Activated T-helper 1 cell treated with anti-CD3 and anti-CD28 coated beads, Interleukin-12 subunit alpha, Interleukin-12 subunit beta, Interleukin-2, Interleukin-4 antibody, amounts not matched to agents 30 ng/mL and 10 ng/mL and 1 ng/mL, durations not matched to agents 14 hours and 24 hours and 36 hours (primary cell): ENCODE measurements at regions of chr5 and their contacts with region 1.

Region 1: DNA sequence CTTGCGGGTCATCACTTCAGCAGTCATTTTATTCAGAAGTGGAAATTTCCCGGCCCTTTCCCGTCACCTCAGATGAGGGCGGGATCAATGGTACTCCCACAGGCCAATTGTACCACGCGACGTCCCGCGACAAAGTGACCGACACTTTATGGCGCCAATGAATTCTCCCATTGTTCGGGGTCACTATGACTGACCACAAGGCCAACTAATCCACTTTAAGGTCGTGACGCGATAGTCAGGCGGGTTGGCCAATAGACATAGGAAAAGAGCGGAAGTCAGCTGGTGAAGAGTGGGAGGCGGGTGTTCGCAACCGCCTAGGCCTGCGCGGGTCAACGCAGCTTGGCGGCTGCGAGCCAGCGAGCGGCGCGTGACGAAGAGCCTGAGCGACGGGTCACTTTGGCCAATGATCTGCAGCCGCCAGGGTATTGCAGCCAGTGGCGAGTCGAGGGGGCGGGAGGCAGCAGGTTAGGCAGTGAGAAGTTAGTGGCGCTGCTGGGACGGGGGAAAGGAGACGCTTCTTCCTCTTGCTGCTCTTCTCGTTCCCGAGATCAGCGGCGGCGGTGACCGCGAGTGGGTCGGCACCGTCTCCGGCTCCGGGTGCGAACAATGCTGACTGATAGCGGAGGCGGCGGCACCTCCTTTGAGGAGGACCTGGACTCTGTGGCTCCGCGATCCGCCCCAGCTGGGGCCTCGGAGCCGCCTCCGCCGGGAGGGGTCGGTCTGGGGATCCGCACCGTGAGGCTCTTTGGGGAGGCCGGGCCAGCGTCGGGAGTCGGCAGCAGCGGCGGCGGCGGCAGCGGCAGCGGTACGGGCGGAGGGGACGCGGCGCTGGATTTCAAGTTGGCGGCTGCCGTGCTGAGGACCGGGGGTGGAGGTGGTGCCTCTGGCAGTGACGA is at the start of gene ANKHD1:
- DNase-seq: peak; percentile 96
- H3K4me3 Mint-ChIP-seq: no peak within 1 kb of the TSS
- H3K27ac Mint-ChIP-seq: peak within 1 kb of the TSS; percentile 88
- H3K4me1 Mint-ChIP-seq: peaks cover 24% of the 10 kb centered on the region
- H3K27me3 Mint-ChIP-seq: no peaks in the 10 kb centered on the region
- total RNA-seq, gene ANKHD1: 121 and 123 TPM in 2 replicates

Region 2: DNA sequence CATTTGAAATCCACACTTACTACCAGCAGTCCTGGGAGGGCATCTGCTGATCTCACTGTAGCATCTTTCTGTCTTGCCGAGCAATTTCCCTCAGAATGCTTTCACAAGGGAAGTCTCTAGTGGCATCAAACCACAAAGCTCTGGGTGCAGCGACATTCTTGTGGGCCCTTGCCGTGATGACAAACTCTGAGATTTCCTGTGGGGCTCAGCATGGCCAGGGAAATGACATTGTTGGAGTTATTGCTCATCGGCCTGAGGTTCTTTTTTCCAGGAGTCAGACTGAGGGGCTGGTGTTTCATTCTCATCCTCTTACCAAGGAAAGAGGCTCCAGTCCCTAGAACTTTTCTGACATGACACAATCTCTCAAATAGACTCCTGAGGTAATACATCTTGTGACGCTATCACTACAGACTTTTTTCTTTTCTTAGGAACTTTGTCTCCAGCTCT is 150.1 kb before region 1 on chr5:
- intact Hi-C with region 1: loop called (anchors 1 kb)
- DNase-seq: peak; percentile 69
- H3K4me3 Mint-ChIP-seq: peak overlapping the region; percentile 66
- H3K27ac Mint-ChIP-seq: peak overlapping the region; percentile 78
- H3K4me1 Mint-ChIP-seq: peaks cover 58% of the 10 kb centered on the region
- H3K27me3 Mint-ChIP-seq: no peaks in the 10 kb centered on the region

Region 3: DNA sequence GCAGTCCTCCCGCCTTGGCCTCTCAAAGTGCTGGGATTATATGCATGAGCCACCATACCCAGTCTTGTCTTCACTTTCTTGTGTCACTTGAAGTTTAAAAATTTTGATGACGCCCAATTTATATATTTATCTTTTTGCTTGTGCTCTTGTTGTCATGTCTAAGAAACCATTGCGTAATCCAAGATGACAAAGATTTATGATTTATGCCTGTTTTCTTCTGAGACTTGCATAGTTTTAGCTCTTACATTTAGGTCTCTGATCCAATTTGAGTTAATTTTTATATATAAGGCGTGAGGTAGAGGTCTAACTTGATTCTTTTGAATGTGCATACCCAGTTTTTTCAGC is 18.6 kb after region 1 on chr5:
- intact Hi-C with region 1: loop called (anchors 1 kb)
- DNase-seq: no peak
- H3K4me3 Mint-ChIP-seq: no peak overlapping the region
- H3K27ac Mint-ChIP-seq: no peak overlapping the region
- H3K4me1 Mint-ChIP-seq: peaks cover 40% of the 10 kb centered on the region
- H3K27me3 Mint-ChIP-seq: no peaks in the 10 kb centered on the region

Region 4: DNA sequence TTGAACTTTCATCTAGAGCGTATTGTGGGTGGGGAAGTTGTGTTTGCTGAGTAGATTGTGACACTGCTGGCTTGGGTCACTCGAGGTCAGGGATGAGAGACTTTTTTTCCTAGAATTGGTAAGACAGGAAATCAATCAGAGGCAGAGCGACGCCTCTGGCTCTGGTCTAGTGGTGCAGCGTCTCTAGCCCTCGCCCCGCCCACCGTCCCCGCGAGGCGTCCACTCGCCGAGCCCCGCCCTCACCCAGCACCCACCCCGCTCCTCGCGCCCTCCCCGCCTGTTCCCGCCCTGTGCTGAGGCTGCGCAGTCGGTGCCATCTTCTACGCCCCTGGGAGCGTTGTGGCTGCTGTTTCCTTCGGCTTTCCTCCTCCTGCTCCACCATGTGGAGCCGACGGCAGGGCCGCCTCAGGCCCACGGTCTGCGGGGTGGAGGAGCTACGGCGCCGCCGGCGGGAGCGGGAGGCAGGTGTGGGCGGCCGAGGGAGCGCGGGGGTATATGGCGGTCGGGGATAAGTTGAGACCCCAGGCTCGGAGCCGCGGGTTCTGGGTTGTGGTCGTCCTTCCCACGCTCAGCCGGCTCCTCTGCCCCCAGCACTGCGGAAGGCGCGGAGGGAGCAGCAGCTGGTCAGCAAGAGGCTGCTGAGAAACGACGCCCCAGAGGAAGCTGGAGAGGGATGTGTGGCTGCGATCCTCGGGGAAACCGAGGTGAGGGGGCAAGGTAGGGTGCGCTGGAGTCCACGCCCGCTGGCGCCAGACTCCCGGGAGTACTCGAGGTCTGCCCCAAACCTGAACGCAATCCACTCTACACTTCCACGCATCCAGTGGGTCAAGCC is 237.8 kb after region 1 on chr5 and contains the start of gene TMCO6:
- intact Hi-C with region 1: loop called (anchors 1 kb)
- DNase-seq: peak; percentile 91
- H3K4me3 Mint-ChIP-seq: peak within 1 kb of the TSS; percentile 93
- H3K27ac Mint-ChIP-seq: peak within 1 kb of the TSS; percentile 97
- H3K4me1 Mint-ChIP-seq: peaks cover 31% of the 10 kb centered on the region
- H3K27me3 Mint-ChIP-seq: peaks cover 2% of the 10 kb centered on the region
- total RNA-seq, gene TMCO6: 43.2 and 43.6 TPM in 2 replicates

Region 5: GRCh38 chr5:140700177-140701144 is 298.9 kb after region 1 on chr5 and contains the start of gene ZMAT2:
- intact Hi-C with region 1: loop called (anchors 1 kb)
- DNase-seq: peak; percentile 92
- H3K4me3 Mint-ChIP-seq: peak within 1 kb of the TSS; percentile 96
- H3K27ac Mint-ChIP-seq: peak within 1 kb of the TSS; percentile 88
- H3K4me1 Mint-ChIP-seq: peaks cover 22% of the 10 kb centered on the region
- H3K27me3 Mint-ChIP-seq: no peaks in the 10 kb centered on the region
- total RNA-seq, gene ZMAT2: 68.0 and 71.2 TPM in 2 replicates

Region 6: GRCh38 chr5:141618804-141619554 is 1217.4 kb after region 1 on chr5 and contains the start of gene DIAPH1:
- intact Hi-C with region 1: loop called (anchors 10 kb)
- DNase-seq: peak; percentile 96
- H3K4me3 Mint-ChIP-seq: peak within 1 kb of the TSS; percentile 98
- H3K27ac Mint-ChIP-seq: peak within 1 kb of the TSS; percentile 96
- H3K4me1 Mint-ChIP-seq: peaks cover 59% of the 10 kb centered on the region
- H3K27me3 Mint-ChIP-seq: no peaks in the 10 kb centered on the region
- total RNA-seq, gene DIAPH1: 221 and 234 TPM in 2 replicates